WTC11 (cell line): ENCODE measurements at regions of chr13 and their contacts with region 1.

Region 1: DNA sequence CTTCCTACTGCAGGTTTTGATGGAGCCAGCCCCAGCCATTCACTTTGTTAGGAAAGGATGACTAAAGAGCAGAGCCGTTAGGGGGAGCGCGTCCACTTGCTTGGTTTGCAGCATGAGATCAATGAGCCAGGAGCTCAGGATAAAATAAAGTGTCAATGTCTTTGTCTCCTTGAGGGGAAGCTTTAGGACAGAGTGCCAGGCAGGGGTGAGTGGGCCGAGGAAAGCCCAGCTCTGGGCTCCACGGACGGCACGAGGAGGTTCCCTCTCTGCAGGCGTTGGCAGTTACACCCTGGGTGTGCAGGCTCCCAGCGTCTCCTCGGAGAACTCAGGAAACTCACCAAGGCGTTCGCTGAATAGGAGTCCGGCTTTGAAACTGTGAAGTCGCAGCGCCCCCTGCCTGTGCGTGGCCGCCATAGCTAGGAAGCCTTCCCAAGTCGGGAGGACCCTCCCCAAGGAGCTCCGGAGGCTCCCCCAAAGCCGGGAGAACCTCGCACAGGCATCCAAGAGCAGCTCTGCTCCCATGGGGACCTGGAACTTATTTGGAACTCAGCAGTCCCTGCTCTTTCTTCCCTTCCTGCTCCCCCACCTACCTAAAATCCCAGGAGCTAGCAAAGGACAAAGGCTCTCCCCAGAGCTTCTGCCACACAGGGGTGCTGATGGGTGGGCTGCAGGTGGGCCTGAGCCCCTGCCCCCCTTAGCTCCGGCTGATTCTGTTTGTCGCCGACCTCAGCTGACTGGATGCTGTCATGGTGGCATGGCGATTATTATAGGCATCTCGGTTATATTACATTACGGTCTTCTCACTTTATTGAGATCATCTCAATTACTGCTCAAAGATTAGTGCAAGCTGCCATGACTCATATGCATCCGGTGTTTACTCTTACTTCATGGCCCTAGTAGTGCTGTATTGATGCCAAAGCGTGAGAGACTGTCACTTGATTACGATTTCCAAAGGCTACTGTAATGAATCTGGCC is 34.4 kb downstream of the GSX1 start:
- DNase-seq: peak; percentile 96
- ATAC-seq: peak; percentile 80
- H3K4me3 Mint-ChIP-seq: peak overlapping the region; percentile 59
- H3K27ac Mint-ChIP-seq: no peak overlapping the region
- H3K4me1 Mint-ChIP-seq: peaks cover 27% of the 10 kb centered on the region
- H3K27me3 Mint-ChIP-seq: peaks cover 100% of the 10 kb centered on the region
- CTCF ChIP-seq: peak; percentile 92

Region 2: GRCh38 chr13:27533155-27533643 is 293.5 kb before region 1 on chr13:
- CTCF ChIA-PET with region 1: interaction called, 42 read pairs
- POLR2A ChIA-PET with region 1: no interaction called
- DNase-seq: peak; percentile 93
- ATAC-seq: peak; percentile 91
- H3K4me3 Mint-ChIP-seq: no peak overlapping the region
- H3K27ac Mint-ChIP-seq: no peak overlapping the region
- H3K4me1 Mint-ChIP-seq: no peaks in the 10 kb centered on the region; the same call in 1 of the 2 replicates
- H3K27me3 Mint-ChIP-seq: no peaks in the 10 kb centered on the region
- CTCF ChIP-seq: peak; percentile 77

Region 3: DNA sequence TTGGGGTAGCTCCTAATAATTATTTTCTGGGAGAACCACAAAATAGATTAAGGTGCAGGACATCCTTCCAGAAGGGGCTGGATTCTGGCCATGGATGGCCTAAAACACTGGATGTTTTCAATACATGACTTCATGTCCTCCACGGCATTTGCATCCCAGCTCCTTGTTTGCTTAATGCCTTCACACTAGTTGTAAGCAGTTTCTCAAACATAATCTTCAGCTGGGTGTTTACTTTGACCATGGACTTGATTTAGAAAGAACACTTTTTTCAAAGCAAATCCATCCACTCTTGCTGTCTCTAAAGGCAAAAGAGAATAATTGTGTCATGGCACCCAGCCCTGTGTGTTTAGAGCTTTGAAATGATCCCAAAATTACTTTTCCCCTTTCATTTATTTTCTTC is 116.9 kb before region 1 on chr13:
- CTCF ChIA-PET with region 1: interaction called, 12 read pairs
- POLR2A ChIA-PET with region 1: no interaction called
- DNase-seq: no peak
- ATAC-seq: no peak
- H3K4me3 Mint-ChIP-seq: no peak overlapping the region
- H3K27ac Mint-ChIP-seq: no peak overlapping the region
- H3K4me1 Mint-ChIP-seq: peaks cover 29% of the 10 kb centered on the region
- H3K27me3 Mint-ChIP-seq: no peaks in the 10 kb centered on the region; the same call in 1 of the 2 replicates
- CTCF ChIP-seq: no peak

Region 4: DNA sequence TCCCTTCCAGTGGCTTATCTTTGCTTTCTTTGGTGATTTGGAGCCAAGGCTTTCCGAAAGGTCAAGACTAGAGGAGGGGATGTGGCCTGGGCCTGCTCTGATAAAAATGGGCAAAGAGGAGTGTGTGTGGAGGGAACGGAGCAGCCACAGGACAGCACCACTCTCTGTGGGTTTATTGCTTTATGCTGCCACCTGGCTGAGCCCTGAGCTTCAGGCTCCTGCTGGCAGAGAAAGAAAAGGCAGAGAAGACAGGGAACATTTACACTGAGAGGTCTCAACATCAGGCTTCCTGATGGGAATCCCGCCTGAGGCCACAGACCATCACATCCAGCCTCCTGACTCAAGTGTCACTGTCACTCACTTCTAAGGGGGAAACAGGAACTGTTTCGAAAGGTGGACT is 43.6 kb before region 1 on chr13:
- CTCF ChIA-PET with region 1: interaction called, 155 read pairs
- POLR2A ChIA-PET with region 1: no interaction called
- DNase-seq: peak; percentile 38
- ATAC-seq: peak; percentile 96
- H3K4me3 Mint-ChIP-seq: no peak overlapping the region
- H3K27ac Mint-ChIP-seq: no peak overlapping the region
- H3K4me1 Mint-ChIP-seq: peaks cover 16% of the 10 kb centered on the region
- H3K27me3 Mint-ChIP-seq: peaks cover 82% of the 10 kb centered on the region
- CTCF ChIP-seq: no peak

Region 5: DNA sequence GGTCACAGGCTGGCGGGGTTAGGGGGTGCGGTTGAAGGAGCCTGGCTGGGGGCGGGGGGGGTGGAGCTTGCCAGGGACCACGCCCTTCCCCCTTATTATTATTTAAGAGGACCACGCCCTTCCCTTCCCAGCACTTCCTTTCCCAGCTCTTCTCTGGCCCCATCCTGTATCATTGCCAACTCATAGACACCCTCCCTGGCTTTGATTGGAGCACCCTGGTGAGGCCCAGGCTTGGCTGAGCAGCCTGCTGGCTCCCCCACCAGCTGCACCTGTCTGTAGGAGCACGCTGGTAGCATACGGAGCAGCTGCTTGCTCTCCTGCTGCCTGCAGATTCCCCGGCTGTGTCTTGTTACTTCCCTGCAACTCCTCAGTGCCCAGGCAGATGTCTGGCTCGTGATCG is 30.6 kb after region 1 on chr13:
- CTCF ChIA-PET with region 1: interaction called, 22 read pairs
- POLR2A ChIA-PET with region 1: interaction called, 4 read pairs
- DNase-seq: no peak
- ATAC-seq: peak; percentile 44
- H3K4me3 Mint-ChIP-seq: no peak overlapping the region
- H3K27ac Mint-ChIP-seq: no peak overlapping the region
- H3K4me1 Mint-ChIP-seq: peaks cover 24% of the 10 kb centered on the region
- H3K27me3 Mint-ChIP-seq: peaks cover 6% of the 10 kb centered on the region
- CTCF ChIP-seq: no peak

Region 6: DNA sequence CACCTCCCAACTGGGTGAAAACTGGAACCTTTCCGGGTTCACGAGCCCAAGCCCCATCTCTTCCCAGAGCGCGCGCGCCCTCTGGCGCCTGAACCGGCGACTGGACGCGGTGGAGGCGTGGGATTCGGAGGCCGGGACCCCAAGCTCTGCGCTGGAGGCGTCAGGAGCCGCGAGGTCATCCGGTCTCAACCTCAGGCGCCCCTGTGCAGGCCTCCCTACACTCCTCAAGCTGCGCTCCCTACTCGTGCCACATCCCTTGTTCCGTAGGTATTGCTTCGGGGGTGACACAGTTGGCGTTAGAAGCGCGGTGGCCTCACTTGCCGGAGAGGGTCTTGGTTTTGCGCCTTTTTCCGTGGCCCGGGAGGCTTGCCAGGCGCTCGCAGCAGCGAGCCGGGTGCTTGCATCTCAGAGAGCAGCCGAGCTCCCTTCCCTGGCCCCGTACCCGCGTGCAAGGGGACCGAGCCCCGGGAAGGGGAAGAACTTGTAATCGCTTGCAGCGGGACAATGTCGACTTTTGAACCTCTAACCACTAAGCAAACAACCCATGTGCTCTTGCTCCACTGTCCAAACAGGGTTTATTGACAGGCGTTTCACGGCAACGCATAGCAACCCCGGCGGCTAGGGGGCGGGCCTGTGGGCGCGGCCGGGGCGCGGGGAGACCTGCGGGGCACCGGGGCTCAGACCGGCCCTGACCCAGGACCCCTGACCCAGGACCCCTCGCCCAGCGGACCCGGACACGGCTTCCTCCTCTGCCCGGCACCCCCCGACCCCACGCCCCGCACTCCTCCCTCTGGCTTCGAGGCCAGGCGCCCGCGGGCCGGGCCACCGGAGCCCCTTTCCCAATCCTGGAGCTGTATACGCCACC is 133.9 kb after region 1 on chr13:
- CTCF ChIA-PET with region 1: interaction called, 211 read pairs
- POLR2A ChIA-PET with region 1: no interaction called
- DNase-seq: peak; percentile 89
- ATAC-seq: peak; percentile 76
- H3K4me3 Mint-ChIP-seq: peak overlapping the region; percentile 56
- H3K27ac Mint-ChIP-seq: no peak overlapping the region
- H3K4me1 Mint-ChIP-seq: peaks cover 37% of the 10 kb centered on the region
- H3K27me3 Mint-ChIP-seq: peaks cover 100% of the 10 kb centered on the region
- CTCF ChIP-seq: peak; percentile 55

Region 7: GRCh38 chr13:28022848-28023518 is 196.3 kb after region 1 on chr13:
- CTCF ChIA-PET with region 1: no interaction called
- POLR2A ChIA-PET with region 1: no interaction called
- DNase-seq: peak; percentile 21
- ATAC-seq: peak; percentile 82
- H3K4me3 Mint-ChIP-seq: peak overlapping the region; percentile 37
- H3K27ac Mint-ChIP-seq: peak overlapping the region; percentile 99
- H3K4me1 Mint-ChIP-seq: peaks cover 22% of the 10 kb centered on the region
- H3K27me3 Mint-ChIP-seq: no peaks in the 10 kb centered on the region
- CTCF ChIP-seq: no peak

Region 8: DNA sequence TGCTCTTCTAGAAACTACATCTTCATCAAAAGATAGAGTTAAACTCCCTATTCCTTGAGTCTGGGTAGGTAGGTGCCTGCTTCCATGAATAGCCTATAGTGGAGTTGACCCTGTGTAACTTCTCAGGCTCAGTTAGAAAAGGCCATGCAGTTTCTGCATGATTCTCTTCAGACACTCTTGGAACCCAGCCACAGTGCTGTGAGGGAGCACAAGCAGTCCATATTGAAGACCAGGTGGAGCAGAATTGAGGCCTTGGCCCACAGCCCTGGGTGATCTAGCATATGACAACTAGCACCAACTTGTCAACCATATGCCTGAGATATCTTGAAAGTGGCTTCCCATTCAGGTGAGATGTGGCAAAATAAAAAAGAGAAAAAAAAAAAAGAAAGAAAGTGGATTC is 301.4 kb after region 1 on chr13:
- CTCF ChIA-PET with region 1: no interaction called
- POLR2A ChIA-PET with region 1: no interaction called
- DNase-seq: no peak
- ATAC-seq: no peak
- H3K4me3 Mint-ChIP-seq: no peak overlapping the region
- H3K27ac Mint-ChIP-seq: no peak overlapping the region
- H3K4me1 Mint-ChIP-seq: no peaks in the 10 kb centered on the region
- H3K27me3 Mint-ChIP-seq: no peaks in the 10 kb centered on the region
- CTCF ChIP-seq: no peak

Region 9: GRCh38 chr13:29679396-29680053 is 1852.9 kb after region 1 on chr13:
- CTCF ChIA-PET with region 1: no interaction called
- POLR2A ChIA-PET with region 1: no interaction called
- DNase-seq: no peak
- ATAC-seq: no peak
- H3K4me3 Mint-ChIP-seq: no peak overlapping the region
- H3K27ac Mint-ChIP-seq: no peak overlapping the region
- H3K4me1 Mint-ChIP-seq: peaks cover 5% of the 10 kb centered on the region
- H3K27me3 Mint-ChIP-seq: no peaks in the 10 kb centered on the region
- CTCF ChIP-seq: no peak